ENCODE measurements at regions of chr2 and their contacts with region 1.

Region 1: DNA sequence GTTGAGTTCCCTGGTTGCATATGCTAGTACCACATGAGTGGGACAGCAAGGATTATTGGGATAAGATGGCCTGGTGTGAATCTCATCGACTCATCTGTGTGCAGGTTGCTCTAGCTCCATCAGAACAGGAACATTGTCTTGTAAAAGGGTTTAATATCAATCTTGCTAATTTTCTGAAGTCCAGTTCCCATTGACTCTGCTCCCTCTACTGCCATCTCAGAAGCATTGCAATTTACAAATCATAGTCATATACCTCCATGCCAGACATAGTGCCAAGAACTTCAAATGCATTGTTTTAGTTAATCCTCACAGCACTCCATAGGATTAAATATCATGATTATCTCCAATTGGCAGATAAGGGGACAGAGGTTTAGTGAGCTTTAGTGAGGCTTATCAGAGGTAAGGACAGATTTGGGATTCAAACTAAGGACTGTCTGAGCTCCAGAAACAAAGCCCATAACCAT is 4.8 kb upstream of the STAT4 start:
- DNase-seq: peak; percentile 20
- H3K4me3 Mint-ChIP-seq: no peak overlapping the region
- H3K27ac Mint-ChIP-seq: no peak overlapping the region
- H3K4me1 Mint-ChIP-seq: peaks cover 47% of the 10 kb centered on the region
- H3K27me3 Mint-ChIP-seq: peaks cover 8% of the 10 kb centered on the region

Region 2: DNA sequence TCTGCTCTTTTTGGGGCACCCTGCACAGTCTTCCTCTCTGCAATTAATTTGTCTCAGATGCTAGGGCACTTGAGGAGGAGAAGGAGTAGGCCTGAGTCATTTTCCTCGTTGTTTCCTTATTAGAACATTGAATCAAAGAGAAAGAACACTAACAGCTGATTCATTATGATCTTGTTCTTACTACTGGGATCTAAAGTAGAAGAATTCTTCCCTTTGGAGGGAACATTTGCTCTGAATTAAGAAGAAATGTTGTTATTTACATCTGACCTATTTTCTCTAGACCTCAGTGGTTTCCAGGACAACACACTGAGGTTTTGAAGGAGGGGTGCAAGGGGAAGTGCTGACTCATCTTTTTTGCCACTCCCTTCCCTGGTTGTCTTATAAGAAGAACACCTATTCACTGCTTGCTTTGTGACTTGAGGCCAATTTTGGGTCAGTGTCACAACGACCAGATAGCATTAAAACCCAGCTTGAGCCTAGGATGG is 117.4 kb before region 1 on chr2:
- CTCF ChIA-PET with region 1: interaction called, 13 read pairs
- DNase-seq: peak; percentile 29
- H3K4me3 Mint-ChIP-seq: no peak overlapping the region
- H3K27ac Mint-ChIP-seq: peak overlapping the region; percentile 77
- H3K4me1 Mint-ChIP-seq: peaks cover 39% of the 10 kb centered on the region
- H3K27me3 Mint-ChIP-seq: no peaks in the 10 kb centered on the region

Region 3: DNA sequence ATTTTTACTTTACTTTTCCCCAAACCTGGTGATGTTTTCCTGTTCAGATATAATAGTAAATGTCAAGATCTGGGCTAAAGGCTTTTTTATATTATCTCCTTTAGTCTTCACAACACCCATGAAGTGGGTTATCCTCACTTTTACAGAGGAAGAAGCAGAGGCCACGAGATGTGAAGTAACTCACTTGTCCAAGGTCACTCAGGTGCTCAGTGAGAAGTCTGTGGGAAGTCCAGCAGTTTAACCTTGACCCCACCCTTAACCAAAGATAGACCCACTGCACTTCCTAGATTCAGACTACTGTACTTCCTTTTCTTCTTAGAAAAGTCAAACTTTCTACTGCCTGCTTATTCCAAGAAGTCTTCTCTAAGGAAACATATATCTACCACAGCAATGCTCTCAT is 85.4 kb before region 1 on chr2:
- CTCF ChIA-PET with region 1: interaction called, 689 read pairs
- DNase-seq: no peak
- H3K4me3 Mint-ChIP-seq: peak overlapping the region; percentile 70
- H3K27ac Mint-ChIP-seq: peak overlapping the region; percentile 92
- H3K4me1 Mint-ChIP-seq: peaks cover 67% of the 10 kb centered on the region
- H3K27me3 Mint-ChIP-seq: no peaks in the 10 kb centered on the region

Region 4: DNA sequence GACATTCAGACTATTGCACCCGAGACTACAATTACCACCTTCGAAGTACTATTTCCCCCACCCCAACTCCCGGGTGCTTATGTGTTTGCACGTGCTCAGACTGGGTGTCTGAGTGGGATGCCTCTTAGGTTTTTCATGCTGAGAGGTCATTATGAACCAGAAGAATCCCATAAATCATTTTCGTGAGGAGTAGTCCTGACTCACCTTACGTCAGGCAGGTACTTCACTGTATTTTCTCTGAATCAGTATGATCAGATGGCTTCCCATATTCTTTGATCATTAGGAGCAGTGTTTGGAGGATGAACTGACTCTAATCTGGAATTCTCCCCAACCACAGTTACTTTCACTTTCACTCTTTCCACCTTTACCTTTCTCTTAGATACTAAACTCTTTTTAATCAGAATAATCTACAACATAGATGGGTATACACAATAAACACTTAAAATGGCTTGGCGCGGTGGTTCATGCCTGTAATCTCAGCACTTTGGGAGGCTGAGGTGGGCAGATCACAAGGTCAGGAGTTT is 33.5 kb after region 1 on chr2:
- CTCF ChIA-PET with region 1: no interaction called
- DNase-seq: no peak
- H3K4me3 Mint-ChIP-seq: no peak overlapping the region
- H3K27ac Mint-ChIP-seq: no peak overlapping the region
- H3K4me1 Mint-ChIP-seq: peaks cover 53% of the 10 kb centered on the region
- H3K27me3 Mint-ChIP-seq: no peaks in the 10 kb centered on the region